ENCODE measurements at regions of chr11 and their contacts with region 1.

Region 1: DNA sequence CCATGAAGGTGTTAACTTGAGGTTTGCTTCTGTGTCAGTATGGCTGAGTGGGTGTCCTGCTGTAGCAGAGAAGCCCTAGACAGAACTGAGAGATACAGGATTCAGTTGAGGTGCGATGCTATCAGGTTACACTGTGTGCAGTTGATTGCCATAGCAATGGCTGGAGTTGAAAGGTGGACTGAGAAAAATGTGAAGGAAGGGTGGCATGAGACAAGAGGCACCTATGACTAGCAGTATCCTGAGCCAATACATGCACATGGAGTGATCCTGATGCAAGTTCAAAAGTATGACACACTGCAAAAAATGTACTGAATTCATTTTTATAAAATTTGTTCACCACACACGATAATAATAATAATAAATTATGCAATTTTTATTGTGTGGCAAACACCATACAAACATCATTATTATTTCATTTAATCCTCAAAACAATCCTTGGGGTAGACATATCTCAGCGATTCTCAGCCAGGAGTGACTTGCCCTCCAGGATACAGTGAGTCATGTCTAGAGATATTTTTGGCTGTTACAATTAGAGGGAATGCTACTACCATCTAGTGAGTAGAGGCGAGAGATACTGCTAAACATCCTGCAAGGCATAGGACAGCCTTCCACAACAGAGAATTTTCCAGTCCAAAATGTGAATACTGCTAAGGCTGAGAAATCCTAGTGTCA is 3.9 kb upstream of the PIWIL4 start:
- DNase-seq: no peak

Region 2: DNA sequence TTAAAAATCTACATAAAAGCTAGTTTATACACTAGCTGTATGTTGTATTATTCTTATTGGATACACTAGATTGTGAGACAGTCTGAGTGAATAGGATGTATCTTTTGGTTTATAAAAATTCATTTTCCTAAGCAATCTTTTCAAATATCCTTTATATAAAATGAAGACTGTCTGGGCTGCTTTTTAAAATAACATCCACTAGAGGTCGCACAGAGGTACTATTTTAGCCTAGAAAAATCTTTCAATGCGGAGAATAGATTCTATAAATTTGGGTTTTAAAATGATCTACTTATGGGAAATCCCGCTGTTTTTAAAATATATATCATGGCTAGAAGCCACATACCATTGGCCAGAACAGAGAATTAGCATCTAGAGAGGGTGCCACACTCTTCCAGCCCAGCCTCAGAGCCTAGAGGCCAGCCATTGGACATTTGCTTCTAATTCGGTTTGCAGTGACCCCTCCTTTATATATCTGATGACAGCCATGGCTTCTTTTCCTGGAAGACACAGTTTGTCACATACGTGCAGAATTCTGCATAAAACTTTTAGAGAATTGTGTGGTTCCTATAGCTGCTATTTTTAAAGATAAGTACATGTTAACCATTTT is 43.7 kb before region 1 on chr11:
- intact Hi-C with region 1: loop called (anchors 5 kb)
- DNase-seq: no peak

Region 3: DNA sequence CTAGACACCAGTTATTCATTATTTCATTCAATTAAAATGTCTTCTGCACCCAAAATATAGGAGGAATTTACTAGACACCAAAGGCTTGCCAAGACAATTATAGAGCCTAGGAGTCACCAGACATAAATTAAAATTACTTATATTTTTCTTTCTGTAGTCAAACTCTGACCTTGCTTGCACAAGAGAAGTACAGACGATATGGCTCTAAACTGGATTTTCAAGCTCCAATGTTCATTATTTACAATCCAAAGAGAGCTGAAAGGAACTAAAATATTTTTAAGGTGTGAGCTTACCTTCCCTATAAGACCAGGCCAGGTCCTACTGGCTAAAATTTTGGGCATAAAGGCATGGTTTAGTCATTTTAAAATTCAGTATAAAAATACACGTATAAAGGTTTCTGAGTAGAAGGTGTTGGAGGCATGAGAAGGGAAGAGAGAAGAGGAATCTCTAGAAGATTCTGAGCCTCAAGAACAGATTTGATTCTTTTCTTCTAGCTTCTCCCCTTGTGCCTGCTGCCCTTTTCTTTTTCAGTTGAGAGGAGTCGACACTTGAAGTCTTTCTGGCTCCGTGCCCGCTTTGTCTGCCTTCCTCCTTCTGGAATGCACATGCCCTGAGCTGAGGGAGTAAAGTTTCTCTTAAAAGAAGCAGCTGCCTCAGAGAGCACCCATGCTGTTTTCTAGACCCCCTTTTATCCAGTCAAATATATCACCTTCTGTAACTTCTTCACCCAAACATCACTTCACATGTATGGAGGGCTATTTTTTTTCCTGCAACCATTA is 37.6 kb before region 1 on chr11:
- intact Hi-C with region 1: loop called (anchors 1 to 5 kb)
- DNase-seq: peak; percentile 84